Endothelial cell of umbilical vein (primary cell): ENCODE measurements at regions of chr16 and their contacts with region 1.

Region 1: DNA sequence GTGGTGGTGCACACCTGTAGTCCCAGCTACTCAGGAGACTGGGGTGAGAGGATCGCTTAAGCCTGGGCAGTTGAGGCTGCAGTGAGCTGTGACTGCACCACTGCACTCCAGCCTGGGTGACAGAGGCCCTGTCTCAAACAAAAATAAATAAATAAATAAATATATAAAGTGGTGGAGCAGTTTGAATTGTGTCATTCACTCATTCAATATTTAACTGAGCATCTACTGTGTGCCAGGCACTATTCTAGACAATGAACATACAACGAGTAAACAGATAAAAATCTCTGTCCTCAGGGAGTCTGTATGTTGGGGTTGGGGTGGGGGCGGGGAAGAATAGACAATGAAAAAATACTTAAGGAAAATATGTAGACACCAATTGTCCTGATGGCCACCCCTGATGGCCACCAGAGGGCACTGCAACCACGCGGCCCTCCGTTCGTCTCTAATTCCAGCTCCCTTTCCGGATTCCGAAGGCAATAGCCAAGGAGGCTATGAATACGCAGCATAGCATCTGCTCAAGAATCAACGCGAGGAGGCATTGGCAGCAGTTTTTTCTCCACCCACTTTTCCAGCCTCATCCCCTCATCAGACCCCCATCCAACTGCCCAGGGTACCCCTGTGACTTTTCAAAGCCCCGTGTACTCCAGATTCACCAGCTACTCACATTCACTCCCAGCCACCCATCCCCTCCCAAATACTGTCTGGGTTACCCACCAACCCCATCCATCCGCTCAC is 21.4 kb downstream of the QPRT start:
- DNase-seq: peak; percentile 92
- H3K4me3 ChIP-seq: no peak overlapping the region
- H3K27ac ChIP-seq: no peak overlapping the region
- H3K4me1 ChIP-seq: peaks cover 5% of the 10 kb centered on the region
- H3K27me3 ChIP-seq: peaks cover 0 to 1% of the 10 kb centered on the region in 2 experiments
- CTCF ChIP-seq: peak; percentile 82 to 85
- POLR2A ChIP-seq: no peak

Region 2: GRCh38 chr16:29675811-29676643 is 24.4 kb before region 1 on chr16:
- CTCF ChIA-PET with region 1: interaction called, 11 read pairs
- POLR2A ChIA-PET with region 1: no interaction called
- dilution Hi-C with region 1: no loop called
- intact Hi-C with region 1: no loop called
- DNase-seq: peak; percentile 18
- H3K4me3 ChIP-seq: no peak overlapping the region
- H3K27ac ChIP-seq: no peak overlapping the region
- H3K4me1 ChIP-seq: no peaks in the 10 kb centered on the region
- H3K27me3 ChIP-seq: peaks cover 0 to 2% of the 10 kb centered on the region in 2 experiments
- CTCF ChIP-seq: no peak
- POLR2A ChIP-seq: no peak

Region 3: GRCh38 chr16:29720699-29721098 is 20.3 kb after region 1 on chr16:
- CTCF ChIA-PET with region 1: interaction called, 76 read pairs
- POLR2A ChIA-PET with region 1: no interaction called
- dilution Hi-C with region 1: no loop called
- intact Hi-C with region 1: loop called (anchors 1 kb)
- DNase-seq: no peak
- H3K4me3 ChIP-seq: no peak overlapping the region
- H3K27ac ChIP-seq: no peak overlapping the region
- H3K4me1 ChIP-seq: no peaks in the 10 kb centered on the region
- H3K27me3 ChIP-seq: no peaks in the 10 kb centered on the region
- CTCF ChIP-seq: no peak
- POLR2A ChIP-seq: no peak

Region 4: DNA sequence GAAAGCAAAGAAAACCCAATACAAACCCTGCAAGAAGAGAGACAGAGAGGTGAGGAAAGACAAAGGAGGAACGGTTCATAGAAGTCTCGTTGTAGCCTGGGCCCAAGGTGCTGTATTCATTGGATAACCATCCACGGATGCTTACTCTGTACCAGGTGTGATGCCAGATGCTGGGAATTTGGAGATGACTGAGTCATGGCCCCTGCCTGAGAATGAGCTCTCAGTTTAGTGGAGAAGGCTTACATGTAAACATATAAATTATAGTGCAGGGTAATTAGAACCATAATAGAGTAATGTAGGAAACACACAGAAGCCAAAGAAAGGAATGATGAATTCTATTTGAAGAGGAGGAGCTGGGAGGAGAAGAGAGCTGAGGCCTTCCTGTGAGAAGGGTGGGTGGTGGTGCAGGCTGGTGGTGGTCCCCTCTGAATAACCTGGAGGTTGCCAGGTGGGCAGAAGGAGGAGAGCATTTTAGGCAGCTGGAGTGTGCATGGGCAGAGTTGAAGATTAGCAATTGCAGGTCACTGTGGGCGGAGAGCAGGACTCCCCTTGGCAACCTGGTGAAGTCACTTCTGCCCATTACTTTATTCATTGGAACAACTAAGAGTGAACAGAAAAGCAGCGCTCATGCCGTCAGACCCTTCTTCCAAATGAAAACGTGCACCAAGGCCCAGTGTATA is 70.0 kb after region 1 on chr16:
- CTCF ChIA-PET with region 1: no interaction called
- POLR2A ChIA-PET with region 1: no interaction called
- dilution Hi-C with region 1: no loop called
- intact Hi-C with region 1: no loop called
- DNase-seq: no peak
- H3K4me3 ChIP-seq: no peak overlapping the region
- H3K27ac ChIP-seq: no peak overlapping the region
- H3K4me1 ChIP-seq: no peaks in the 10 kb centered on the region
- H3K27me3 ChIP-seq: no peaks in the 10 kb centered on the region
- CTCF ChIP-seq: no peak
- POLR2A ChIP-seq: no peak

Region 5: DNA sequence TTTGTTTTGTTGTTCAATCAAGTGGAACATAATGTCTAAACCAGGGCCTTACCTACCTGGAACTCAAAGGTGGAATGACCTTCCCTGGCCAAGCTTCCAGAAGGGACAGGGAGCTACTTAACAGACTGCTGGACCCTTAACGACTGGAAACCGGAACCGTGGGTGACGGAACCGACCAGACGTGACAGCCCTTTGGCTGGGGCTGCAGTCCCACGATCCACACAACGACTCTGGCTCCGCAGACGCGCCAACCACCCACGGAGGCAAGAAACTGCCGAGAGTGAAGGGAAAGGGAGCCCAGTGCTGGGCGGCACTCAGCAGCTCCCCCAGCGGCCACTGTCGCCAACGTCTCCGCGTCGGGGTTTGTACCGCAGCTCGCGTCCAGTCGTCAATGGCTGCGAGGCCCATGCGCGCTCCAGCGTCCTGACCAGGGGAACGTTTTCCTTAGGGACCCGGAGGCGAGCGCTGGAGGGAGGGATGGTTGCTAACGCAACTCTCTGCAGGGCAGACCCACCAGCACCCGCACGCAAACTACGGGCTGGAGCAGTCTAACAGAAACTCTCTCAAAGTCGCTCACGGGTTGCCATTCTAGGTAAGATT is 84.6 kb after region 1 on chr16:
- CTCF ChIA-PET with region 1: interaction called, 19 read pairs
- POLR2A ChIA-PET with region 1: no interaction called
- dilution Hi-C with region 1: no loop called
- intact Hi-C with region 1: loop called (anchors 2 kb)
- DNase-seq: peak; percentile 76
- H3K4me3 ChIP-seq: peak overlapping the region in 1 of 3 experiments; percentile 5
- H3K27ac ChIP-seq: no peak overlapping the region
- H3K4me1 ChIP-seq: peaks cover 10% of the 10 kb centered on the region
- H3K27me3 ChIP-seq: peaks cover 7 to 16% of the 10 kb centered on the region in 2 experiments
- CTCF ChIP-seq: peak; percentile 91 to 98
- POLR2A ChIP-seq: no peak

Region 6: GRCh38 chr16:29815793-29816693 is 115.6 kb after region 1 on chr16 and contains the start of gene PAGR1:
- CTCF ChIA-PET with region 1: interaction called, 16 read pairs
- POLR2A ChIA-PET with region 1: no interaction called
- dilution Hi-C with region 1: no loop called
- intact Hi-C with region 1: no loop called
- DNase-seq: peak; percentile 100
- H3K4me3 ChIP-seq: peak within 1 kb of the TSS; percentile 65 to 85 (median 81)
- H3K27ac ChIP-seq: peak within 1 kb of the TSS; percentile 47
- H3K4me1 ChIP-seq: peaks cover 35% of the 10 kb centered on the region
- H3K27me3 ChIP-seq: no peaks in the 10 kb centered on the region
- CTCF ChIP-seq: peak; percentile 95 to 98
- POLR2A ChIP-seq: peak; percentile 80
- total RNA-seq, gene PAGR1: 24.2 and 26.3 TPM in 2 replicates

Region 7: DNA sequence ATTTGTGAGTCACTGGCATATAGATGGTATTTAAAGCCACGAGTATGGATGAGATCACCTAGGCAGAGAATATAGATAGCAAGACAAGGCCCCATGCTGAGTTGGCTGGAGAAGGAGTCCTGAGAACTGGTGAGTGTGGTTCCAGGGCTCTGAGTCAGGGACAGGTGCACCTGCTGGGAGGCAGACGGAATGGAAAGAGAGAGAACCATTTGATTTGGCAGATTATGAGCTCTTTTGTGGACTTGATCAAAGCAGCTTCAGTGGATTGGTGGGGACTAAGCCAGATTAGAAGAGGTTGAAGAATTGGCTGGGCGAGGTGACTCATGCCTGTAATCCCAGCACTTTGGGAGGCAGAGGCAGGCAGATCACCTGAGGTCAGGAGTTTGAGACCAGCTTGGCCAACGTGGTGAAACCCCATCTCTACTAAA is 318.3 kb after region 1 on chr16:
- CTCF ChIA-PET with region 1: interaction called, 10 read pairs
- POLR2A ChIA-PET with region 1: no interaction called
- dilution Hi-C with region 1: no loop called
- intact Hi-C with region 1: loop called (anchors 1 kb)
- DNase-seq: no peak
- H3K4me3 ChIP-seq: no peak overlapping the region
- H3K27ac ChIP-seq: no peak overlapping the region
- H3K4me1 ChIP-seq: no peaks in the 10 kb centered on the region
- H3K27me3 ChIP-seq: no peaks in the 10 kb centered on the region
- CTCF ChIP-seq: no peak
- POLR2A ChIP-seq: no peak